ENCODE measurements at regions of chr17 and their contacts with region 1.

Region 1: GRCh38 chr17:50719144-50719923 is at the start of gene LUC7L3:
- DNase-seq: peak; percentile 92
- ATAC-seq: peak; percentile 88
- H3K4me3 ChIP-seq: peak within 1 kb of the TSS; percentile 82 to 96 (median 94)
- H3K27ac ChIP-seq: peak within 1 kb of the TSS; percentile 95
- H3K4me1 ChIP-seq: peaks cover 66% of the 10 kb centered on the region
- H3K27me3 ChIP-seq: no peaks in the 10 kb centered on the region
- CTCF ChIP-seq: no peak
- EP300 ChIP-seq: peak; percentile 36 to 50; a peak in 3 of 4 replicates
- POLR2A ChIP-seq: peak; percentile 94 to 96
- RAD21 ChIP-seq: peak; percentile 4; the same call in 1 of the 2 replicates
- total RNA-seq, gene LUC7L3: 60.2 and 108 TPM in 2 replicates

Region 2: GRCh38 chr17:50541716-50542688 is 177.3 kb before region 1 on chr17:
- CTCF ChIA-PET with region 1: no interaction called
- POLR2A ChIA-PET with region 1: interaction called, 17 read pairs
- in situ Hi-C with region 1: no loop called
- intact Hi-C with region 1: no loop called
- DNase-seq: peak; percentile 81
- ATAC-seq: peak; percentile 69
- H3K4me3 ChIP-seq: peak overlapping the region; percentile 73 to 87 (median 78)
- H3K27ac ChIP-seq: peak overlapping the region; percentile 97
- H3K4me1 ChIP-seq: peaks cover 80% of the 10 kb centered on the region
- H3K27me3 ChIP-seq: no peaks in the 10 kb centered on the region; a peak in 1 of 5 replicates
- CTCF ChIP-seq: peak; percentile 54; the same call in 1 of the 2 replicates
- EP300 ChIP-seq: 0 out of 4 replicates have a peak, but pooled peaks of 1 of the 2 experiments have one; percentile 5
- POLR2A ChIP-seq: peak; percentile 90
- RAD21 ChIP-seq: peak; percentile 69; the same call in 1 of the 2 replicates

Region 3: DNA sequence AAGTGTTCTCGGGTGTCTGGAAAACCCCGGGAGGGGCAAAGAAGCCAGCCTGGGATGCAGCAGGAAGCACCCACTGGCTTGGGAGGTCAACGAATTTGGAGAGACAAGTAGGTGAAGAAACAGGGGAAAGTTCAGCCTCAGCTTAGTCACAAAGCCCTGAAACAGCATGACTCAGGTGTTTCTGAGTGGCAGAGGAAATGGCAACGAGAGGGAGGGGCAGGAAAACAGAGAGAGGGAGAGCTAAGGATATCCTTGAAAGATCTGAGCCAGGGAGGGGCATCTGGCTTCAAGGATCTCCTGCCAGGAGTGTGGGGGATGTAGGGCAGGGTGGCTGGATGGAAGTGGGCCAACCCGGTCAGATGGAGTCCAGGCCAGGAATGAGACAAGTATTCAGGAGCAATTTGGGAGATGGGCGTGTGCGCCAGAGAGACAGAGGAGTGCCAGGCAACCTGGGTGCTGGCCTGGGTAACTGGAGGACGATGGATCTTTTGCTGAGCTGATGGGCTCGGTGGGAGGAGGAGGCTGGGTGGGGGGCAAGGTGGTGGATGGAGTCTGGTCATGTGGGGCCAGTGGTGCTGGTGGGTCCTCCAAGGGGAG is 57.4 kb before region 1 on chr17:
- CTCF ChIA-PET with region 1: no interaction called
- POLR2A ChIA-PET with region 1: interaction called, 11 read pairs
- in situ Hi-C with region 1: no loop called
- intact Hi-C with region 1: no loop called
- DNase-seq: peak; percentile 93
- ATAC-seq: peak; percentile 42
- H3K4me3 ChIP-seq: peak overlapping the region in 1 of 3 experiments; percentile 11; a peak in 2 of 6 replicates
- H3K27ac ChIP-seq: peak overlapping the region; percentile 82
- H3K4me1 ChIP-seq: peaks cover 76% of the 10 kb centered on the region
- H3K27me3 ChIP-seq: no peaks in the 10 kb centered on the region
- CTCF ChIP-seq: no peak
- EP300 ChIP-seq: peak; percentile 31 to 94; a peak in 3 of 4 replicates
- POLR2A ChIP-seq: peak in 1 of 2 experiments; percentile 48; a peak in 1 of 4 replicates
- RAD21 ChIP-seq: no peak

Region 4: GRCh38 chr17:50691545-50692447 is 27.5 kb before region 1 on chr17:
- CTCF ChIA-PET with region 1: no interaction called
- POLR2A ChIA-PET with region 1: interaction called, 19 read pairs
- in situ Hi-C with region 1: no loop called
- intact Hi-C with region 1: no loop called
- DNase-seq: peak; percentile 85
- ATAC-seq: peak; percentile 7
- H3K4me3 ChIP-seq: peak overlapping the region in 1 of 3 experiments; percentile 42; a peak in 1 of 6 replicates
- H3K27ac ChIP-seq: peak overlapping the region; percentile 89
- H3K4me1 ChIP-seq: peaks cover 91% of the 10 kb centered on the region
- H3K27me3 ChIP-seq: no peaks in the 10 kb centered on the region
- CTCF ChIP-seq: no peak
- EP300 ChIP-seq: peak; percentile 27 to 71; a peak in 2 of 4 replicates
- POLR2A ChIP-seq: peak; percentile 10 to 29; a peak in 2 of 4 replicates
- RAD21 ChIP-seq: peak; percentile 9; the same call in 1 of the 2 replicates

Region 5: DNA sequence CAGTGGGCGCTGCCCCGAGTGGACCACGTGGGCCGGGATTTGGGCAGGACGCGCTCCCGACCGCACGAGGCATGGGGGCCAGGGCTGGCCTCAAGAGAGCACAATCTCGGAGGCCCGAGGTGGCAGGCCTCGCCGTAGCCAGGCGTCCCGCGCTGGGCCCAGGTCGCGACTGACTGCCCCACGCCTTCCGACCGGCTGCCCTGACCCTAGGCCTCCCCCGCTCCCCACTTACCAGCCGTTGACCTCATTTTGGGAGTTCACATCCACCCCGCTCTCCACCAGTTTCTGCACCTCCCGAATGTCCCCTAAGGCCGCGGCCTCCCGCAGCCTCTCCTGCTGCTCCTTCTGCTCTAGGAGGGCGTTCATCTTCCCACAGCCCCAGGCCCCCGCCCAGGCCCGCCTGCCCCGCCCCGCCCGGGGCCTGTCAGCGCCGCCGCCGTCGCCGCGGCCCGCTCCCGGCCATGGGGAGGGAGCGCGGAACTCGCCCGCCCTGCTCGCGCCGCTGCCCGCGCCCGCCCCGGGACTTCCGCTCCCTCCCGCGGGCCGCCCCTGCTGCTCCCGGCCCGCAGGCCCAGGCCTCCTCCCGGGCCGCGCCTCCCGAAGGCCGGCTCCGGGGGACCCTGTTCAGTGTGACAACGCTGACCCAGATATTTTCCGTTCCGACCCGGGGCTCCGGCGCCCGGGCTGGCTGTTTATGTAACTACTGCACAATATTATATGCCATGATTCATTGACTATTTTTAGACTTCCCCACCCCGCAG is 11.9 kb before region 1 on chr17 and contains the start of gene ANKRD40:
- CTCF ChIA-PET with region 1: no interaction called
- POLR2A ChIA-PET with region 1: interaction called, 54 read pairs
- in situ Hi-C with region 1: no loop called
- intact Hi-C with region 1: no loop called
- DNase-seq: peak; percentile 88
- ATAC-seq: peak; percentile 82
- H3K4me3 ChIP-seq: peak within 1 kb of the TSS; percentile 87 to 92 (median 88)
- H3K27ac ChIP-seq: peak within 1 kb of the TSS; percentile 91
- H3K4me1 ChIP-seq: peaks cover 56% of the 10 kb centered on the region
- H3K27me3 ChIP-seq: no peaks in the 10 kb centered on the region; a peak in 1 of 5 replicates
- CTCF ChIP-seq: no peak
- EP300 ChIP-seq: peak; percentile 69 to 75
- POLR2A ChIP-seq: peak; percentile 59 to 65; a peak in 3 of 4 replicates
- RAD21 ChIP-seq: peak; percentile 55
- total RNA-seq, gene ANKRD40: 46.4 and 52.4 TPM in 2 replicates

Region 6: DNA sequence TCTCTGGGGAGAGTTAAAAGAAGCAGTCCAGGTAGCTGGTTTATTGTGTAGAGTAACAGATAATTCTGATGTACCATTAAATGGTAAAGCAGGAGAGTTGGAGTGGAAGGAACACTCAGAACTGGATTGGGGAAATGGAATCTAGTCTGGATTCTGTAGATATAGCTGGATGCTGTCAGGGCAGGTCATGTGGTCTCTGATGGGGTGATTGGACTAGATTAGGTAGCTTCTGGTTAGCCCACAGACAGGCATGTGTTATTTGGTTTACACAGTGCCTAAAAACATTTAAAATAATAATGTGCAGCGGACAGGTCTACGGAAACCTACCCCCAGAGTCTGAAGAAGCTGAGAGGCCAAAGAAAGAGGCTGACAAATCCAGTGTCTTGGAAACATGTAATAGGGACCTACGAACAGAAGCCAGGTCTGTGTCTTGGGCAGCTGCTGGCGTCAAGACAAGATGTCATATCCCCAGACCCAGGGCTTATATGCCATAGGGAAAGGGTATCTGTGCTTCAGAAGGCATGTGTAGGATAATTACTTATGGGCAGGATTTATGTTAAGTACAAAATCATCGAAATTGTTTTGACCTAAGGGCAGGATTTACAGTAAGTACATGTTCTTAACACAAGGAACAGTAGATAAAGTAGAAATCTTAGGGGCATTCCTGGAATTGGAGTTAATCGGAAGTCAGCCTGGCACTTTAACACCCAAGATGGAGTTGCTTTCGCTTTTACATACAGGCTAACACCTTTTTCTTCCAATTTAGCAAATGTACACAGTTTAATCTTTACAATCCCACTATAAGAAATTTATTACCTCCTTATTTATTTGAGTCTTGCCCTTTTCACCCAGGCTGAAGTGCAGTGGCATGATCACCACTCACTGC is 12.5 kb after region 1 on chr17:
- CTCF ChIA-PET with region 1: no interaction called
- POLR2A ChIA-PET with region 1: interaction called, 14 read pairs
- in situ Hi-C with region 1: no loop called
- intact Hi-C with region 1: no loop called
- DNase-seq: no peak
- ATAC-seq: no peak
- H3K4me3 ChIP-seq: no peak overlapping the region
- H3K27ac ChIP-seq: no peak overlapping the region
- H3K4me1 ChIP-seq: peaks cover 46% of the 10 kb centered on the region
- H3K27me3 ChIP-seq: no peaks in the 10 kb centered on the region
- CTCF ChIP-seq: no peak
- EP300 ChIP-seq: no peak
- POLR2A ChIP-seq: no peak
- RAD21 ChIP-seq: no peak

Region 7: DNA sequence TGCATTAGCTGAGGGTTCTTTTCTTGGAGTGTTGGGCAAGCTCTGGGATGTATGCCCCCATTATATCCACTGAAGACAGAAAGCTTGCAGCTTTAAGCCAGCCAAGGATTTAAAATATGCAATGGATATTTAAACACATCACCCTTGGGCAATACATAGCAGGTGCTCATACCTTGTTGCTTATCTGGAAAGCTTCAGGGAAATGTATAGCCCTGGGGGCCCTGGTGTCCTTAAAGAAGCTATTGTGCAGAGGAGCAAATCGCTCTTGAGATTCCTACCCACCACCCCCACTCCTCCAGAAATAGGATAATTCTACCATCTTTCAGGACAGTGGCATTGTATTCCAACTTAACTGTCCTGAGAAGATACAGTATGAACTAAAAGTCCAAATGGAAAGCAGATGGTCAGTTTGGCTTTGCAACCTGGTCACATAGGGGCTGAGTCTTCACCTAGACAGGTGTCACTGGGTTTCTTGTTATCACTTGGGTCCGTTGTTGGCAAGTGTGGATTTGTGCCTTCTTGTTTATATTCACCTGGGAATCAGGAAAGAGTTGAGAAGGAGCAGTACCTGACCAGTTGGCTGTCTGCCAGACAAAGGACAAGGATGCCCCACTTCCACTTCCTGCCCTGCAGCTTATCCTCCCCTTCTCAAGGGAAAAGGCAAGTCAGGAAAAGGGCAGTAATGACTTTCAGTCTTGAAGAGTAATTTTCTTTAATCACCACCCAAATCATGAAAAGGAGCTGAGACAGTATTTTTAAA is 44.6 kb after region 1 on chr17:
- CTCF ChIA-PET with region 1: no interaction called
- POLR2A ChIA-PET with region 1: interaction called, 10 read pairs
- in situ Hi-C with region 1: no loop called
- intact Hi-C with region 1: no loop called
- DNase-seq: no peak
- ATAC-seq: no peak
- H3K4me3 ChIP-seq: no peak overlapping the region
- H3K27ac ChIP-seq: no peak overlapping the region
- H3K4me1 ChIP-seq: peaks cover 65% of the 10 kb centered on the region
- H3K27me3 ChIP-seq: peaks cover 0 to 2% of the 10 kb centered on the region in 2 experiments; a peak in 1 of 5 replicates
- CTCF ChIP-seq: no peak
- EP300 ChIP-seq: no peak
- POLR2A ChIP-seq: no peak
- RAD21 ChIP-seq: no peak